Right ventricle myocardium superior (tissue), 1 donor: ENCODE measurements at regions of chr22 and their contacts with region 1.

Region 1: GRCh38 chr22:42662114-42663021 is 13.2 kb upstream of the CYB5R3 start:
- DNase-seq: peak; percentile 91
- ATAC-seq: peak; percentile 97

Region 2: GRCh38 chr22:42717197-42717928 is 55.0 kb after region 1 on chr22:
- intact Hi-C with region 1: loop called (anchors 5 kb)
- DNase-seq: no peak
- ATAC-seq: no peak

Region 3: GRCh38 chr22:42732081-42732480 is 69.7 kb after region 1 on chr22:
- intact Hi-C with region 1: no loop called
- DNase-seq: no peak
- ATAC-seq: no peak

Region 4: DNA sequence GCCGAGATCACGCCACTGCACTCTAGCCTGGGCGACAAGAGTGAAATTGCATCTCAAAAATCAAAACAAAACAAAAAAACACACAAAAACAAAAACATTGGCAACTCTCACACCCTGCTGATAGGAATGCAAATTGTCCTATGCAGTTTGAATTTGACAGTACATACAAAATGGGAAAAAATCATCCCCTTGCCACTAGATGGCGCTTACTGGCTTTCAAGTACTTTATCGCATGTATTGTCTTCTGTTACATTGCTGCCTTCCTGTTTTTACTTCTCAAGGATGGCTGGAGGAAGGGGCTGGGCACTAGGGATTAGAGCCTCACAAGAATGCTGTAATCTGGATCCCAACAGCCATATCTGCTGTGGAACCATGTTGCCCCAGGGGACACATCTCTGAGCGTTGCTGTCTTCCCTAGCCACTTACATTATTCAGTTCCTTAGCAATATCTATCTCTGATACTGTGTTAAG is 117.7 kb after region 1 on chr22:
- intact Hi-C with region 1: loop called (anchors 2 kb)
- DNase-seq: no peak
- ATAC-seq: peak; percentile 90

Region 5: DNA sequence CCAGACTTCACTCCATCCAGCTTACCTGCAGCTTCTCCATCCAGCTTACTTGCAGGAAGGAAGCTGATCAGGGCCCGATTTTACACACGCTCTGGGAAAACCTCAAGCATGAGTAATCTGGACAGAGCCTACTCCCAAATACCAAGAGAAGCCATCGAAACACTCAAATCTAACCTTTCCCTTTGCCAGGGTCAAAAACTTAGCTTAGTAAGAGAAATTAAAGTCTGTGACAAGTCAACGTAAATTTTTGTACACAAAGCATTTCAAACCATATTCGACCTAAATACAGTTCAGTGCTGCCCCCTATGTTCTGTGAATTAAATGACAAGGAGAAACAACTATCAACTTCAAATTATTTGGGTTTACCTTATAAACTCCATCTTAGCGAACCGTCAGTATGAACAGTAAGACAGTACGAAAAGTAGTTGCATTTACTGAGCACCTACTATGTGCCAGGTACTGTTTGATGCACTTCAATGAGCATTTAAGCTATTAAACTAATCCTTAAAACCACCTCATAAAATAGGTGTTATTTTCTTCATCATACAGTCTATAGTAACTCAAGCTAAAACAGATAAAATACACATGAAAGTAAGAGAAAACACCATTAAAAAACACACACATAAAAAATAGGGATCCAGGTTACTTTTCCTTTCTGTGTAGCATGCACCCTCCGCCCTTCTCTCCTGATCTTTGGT is 157.8 kb after region 1 on chr22:
- intact Hi-C with region 1: loop called (anchors 5 kb)
- DNase-seq: no peak
- ATAC-seq: peak; percentile 62

Region 6: GRCh38 chr22:43308060-43308830 is 645.9 kb after region 1 on chr22:
- intact Hi-C with region 1: no loop called
- DNase-seq: peak; percentile 40
- ATAC-seq: no peak

Region 7: GRCh38 chr22:44309137-44309536 is 1646.8 kb after region 1 on chr22:
- intact Hi-C with region 1: no loop called
- DNase-seq: peak; percentile 57
- ATAC-seq: peak; percentile 31